Activated CD4-positive, alpha-beta memory T cell treated with anti-CD3 and anti-CD28 coated beads for 36 hours (primary cell): ENCODE measurements at regions of chr12 and their contacts with region 1.

Region 1: GRCh38 chr12:96985480-96986362 is 78.7 kb downstream of the NEDD1 start:
- DNase-seq: peak; percentile 47
- H3K4me3 Mint-ChIP-seq: peak overlapping the region; percentile 52
- H3K27ac Mint-ChIP-seq: no peak overlapping the region
- H3K4me1 Mint-ChIP-seq: peaks cover 6% of the 10 kb centered on the region
- H3K27me3 Mint-ChIP-seq: peaks cover 11% of the 10 kb centered on the region

Region 2: DNA sequence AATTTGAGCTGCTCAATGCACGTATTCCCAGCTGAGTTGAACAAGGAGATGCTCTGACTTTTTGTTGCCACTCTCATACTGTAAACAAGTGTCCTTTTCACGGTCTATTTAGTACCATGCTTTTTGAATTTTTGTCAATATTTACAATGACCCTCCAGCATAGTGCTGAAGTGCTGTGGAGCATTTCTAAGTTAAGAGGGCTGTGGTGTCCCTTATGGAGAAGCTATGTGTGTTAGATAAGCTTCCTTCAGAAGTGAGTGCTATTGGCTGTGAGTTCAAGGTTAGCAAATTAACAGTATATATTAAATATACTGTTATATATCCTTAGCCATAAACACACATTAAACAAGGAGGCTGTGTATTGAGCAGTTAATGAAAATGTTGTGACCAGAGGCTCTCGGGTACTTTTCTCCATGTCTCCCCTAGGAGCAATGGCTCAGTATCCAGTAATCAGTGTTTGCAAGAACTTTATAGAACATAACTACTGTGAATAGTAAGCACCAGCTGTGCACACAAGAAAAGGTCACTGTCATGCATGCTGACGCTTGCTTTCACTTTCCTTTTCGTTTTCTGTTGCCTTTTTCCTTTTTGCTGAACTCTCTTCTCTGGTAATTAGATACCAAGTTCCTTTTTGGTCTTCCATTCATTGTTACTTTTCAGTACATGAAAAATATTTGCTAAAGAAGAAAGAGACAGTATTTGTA is 265.9 kb before region 1 on chr12:
- CTCF ChIA-PET with region 1: interaction called, 3 read pairs
- POLR2A ChIA-PET with region 1: no interaction called
- intact Hi-C with region 1: loop called (anchors 5 kb)
- DNase-seq: peak; percentile 24
- H3K4me3 Mint-ChIP-seq: peak overlapping the region; percentile 81
- H3K27ac Mint-ChIP-seq: peak overlapping the region; percentile 88
- H3K4me1 Mint-ChIP-seq: peaks cover 11% of the 10 kb centered on the region
- H3K27me3 Mint-ChIP-seq: no peaks in the 10 kb centered on the region

Region 3: DNA sequence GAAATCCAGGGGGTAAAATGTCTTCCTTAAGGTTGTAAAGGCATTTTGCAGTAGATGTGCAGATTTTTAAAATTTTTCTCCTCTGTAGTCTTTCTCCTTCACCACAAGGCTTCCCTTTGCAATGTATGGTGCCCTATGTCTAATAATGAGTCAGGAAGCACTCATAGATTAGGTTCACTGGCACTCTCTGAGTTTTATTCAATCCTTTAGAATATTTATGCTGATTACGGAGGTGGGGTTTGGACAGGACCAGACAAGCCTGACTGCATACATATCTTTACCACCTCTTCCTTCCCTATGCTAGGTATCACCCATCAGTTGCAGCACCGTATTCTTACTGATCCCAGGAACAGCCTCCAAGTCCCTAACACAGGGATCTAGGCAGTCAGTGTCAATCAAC is 20.9 kb after region 1 on chr12:
- CTCF ChIA-PET with region 1: no interaction called
- POLR2A ChIA-PET with region 1: no interaction called
- intact Hi-C with region 1: no loop called
- DNase-seq: no peak
- H3K4me3 Mint-ChIP-seq: no peak overlapping the region
- H3K27ac Mint-ChIP-seq: no peak overlapping the region
- H3K4me1 Mint-ChIP-seq: no peaks in the 10 kb centered on the region
- H3K27me3 Mint-ChIP-seq: peaks cover 8% of the 10 kb centered on the region

Region 4: GRCh38 chr12:97308576-97309198 is 323.0 kb after region 1 on chr12:
- CTCF ChIA-PET with region 1: interaction called, 9 read pairs
- POLR2A ChIA-PET with region 1: no interaction called
- intact Hi-C with region 1: loop called (anchors 2 kb)
- DNase-seq: no peak
- H3K4me3 Mint-ChIP-seq: no peak overlapping the region
- H3K27ac Mint-ChIP-seq: no peak overlapping the region
- H3K4me1 Mint-ChIP-seq: no peaks in the 10 kb centered on the region
- H3K27me3 Mint-ChIP-seq: peaks cover 7% of the 10 kb centered on the region